ENCODE measurements at regions of chr11 and their contacts with region 1.

Region 1: DNA sequence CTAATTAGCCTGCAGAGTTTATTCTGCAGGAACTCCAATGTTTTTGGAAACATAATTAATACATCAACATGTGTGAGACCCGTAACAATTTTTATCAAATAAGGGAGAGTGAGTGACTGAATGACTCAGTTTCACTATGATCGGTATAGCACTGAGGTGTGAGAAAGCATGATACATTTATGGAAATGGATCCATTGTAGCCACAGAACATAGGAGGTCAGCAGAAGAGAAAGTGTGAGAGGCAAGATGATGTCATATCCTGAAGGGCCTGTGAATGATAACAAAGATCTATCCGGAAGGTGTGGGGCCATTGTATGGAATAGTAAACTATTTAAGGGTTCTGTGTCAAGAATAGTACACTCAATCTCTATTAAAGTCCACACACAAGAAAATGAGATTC is 1406.2 kb upstream of the TENM4 start:
- DNase-seq: no peak
- H3K4me3 ChIP-seq: no peak overlapping the region
- H3K27ac ChIP-seq: no peak overlapping the region
- H3K4me1 ChIP-seq: no peaks in the 10 kb centered on the region
- H3K27me3 ChIP-seq: no peaks in the 10 kb centered on the region
- CTCF ChIP-seq: no peak

Region 2: DNA sequence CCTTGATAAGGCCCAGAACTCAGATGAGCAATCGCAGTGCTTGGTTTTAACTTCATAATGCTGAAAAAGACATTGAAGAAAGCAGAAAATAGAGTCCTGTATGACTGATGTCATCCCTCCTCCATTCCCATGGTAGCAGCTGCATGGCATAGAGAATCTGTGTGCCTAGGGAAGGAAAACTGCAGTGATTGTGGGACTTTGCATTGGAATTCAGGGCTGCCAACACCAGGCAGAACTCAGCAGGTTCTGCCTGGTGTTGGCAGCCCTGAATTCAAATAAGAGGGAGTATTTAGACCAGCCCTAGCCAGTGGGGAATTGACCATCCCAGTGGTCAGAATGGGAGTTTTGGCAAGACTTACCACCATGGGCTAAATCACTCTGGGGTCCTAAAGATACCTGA is 870.7 kb after region 1 on chr11:
- intact Hi-C with region 1: loop called (anchors 10 kb)
- DNase-seq: no peak
- H3K4me3 ChIP-seq: no peak overlapping the region
- H3K27ac ChIP-seq: no peak overlapping the region
- H3K4me1 ChIP-seq: no peaks in the 10 kb centered on the region
- H3K27me3 ChIP-seq: no peaks in the 10 kb centered on the region
- CTCF ChIP-seq: no peak